Endothelial cell of umbilical vein (primary cell): ENCODE measurements at regions of chrX and their contacts with region 1.

Region 1: DNA sequence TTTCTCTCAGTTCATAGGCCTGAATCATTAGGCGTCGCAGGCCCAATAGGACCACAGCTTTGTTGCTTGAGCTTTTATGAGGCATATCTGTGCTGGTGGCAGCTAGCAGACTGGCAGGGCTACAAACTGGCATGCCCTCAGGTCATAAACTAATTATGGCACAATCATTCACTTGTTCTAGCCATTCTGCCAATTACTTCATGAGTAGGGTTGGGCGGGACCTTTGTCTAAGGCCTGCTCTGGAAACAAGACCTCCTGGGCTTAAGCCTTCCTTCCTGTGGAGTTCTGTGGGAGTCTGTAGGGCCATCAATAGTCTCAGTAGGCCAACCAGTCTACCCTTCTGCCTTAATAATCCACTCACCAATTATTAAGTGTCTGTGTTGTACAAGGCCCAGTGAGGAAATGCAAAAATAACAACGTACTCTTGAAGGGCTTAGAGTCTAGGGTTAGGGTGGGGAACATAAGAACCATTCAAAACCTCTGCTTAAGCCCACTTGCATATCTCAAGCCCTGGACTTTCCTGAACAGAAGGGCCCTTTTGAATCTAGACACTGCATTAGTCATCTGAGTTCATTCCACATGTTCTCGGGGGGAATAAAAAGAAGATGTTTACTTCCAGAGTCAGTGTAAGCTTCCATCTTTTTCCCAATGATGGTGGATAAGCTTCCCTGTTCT is 44.5 kb downstream of the SHROOM4 start:
- DNase-seq: peak; percentile 25
- H3K4me3 ChIP-seq: no peak overlapping the region
- H3K27ac ChIP-seq: peak overlapping the region; percentile 84
- H3K4me1 ChIP-seq: peaks cover 38% of the 10 kb centered on the region
- H3K27me3 ChIP-seq: no peaks in the 10 kb centered on the region
- CTCF ChIP-seq: no peak
- POLR2A ChIP-seq: no peak

Region 2: GRCh38 chrX:50799531-50799961 is 30.0 kb after region 1 on chrX:
- CTCF ChIA-PET with region 1: interaction called, 3 read pairs
- POLR2A ChIA-PET with region 1: no interaction called
- dilution Hi-C with region 1: no loop called
- intact Hi-C with region 1: loop called (anchors 2 kb)
- DNase-seq: peak; percentile 79
- H3K4me3 ChIP-seq: no peak overlapping the region
- H3K27ac ChIP-seq: peak overlapping the region; percentile 88
- H3K4me1 ChIP-seq: peaks cover 17% of the 10 kb centered on the region
- H3K27me3 ChIP-seq: no peaks in the 10 kb centered on the region
- CTCF ChIP-seq: no peak
- POLR2A ChIP-seq: no peak

Region 3: GRCh38 chrX:50838820-50839600 is 69.5 kb after region 1 on chrX:
- CTCF ChIA-PET with region 1: no interaction called
- POLR2A ChIA-PET with region 1: no interaction called
- dilution Hi-C with region 1: no loop called
- intact Hi-C with region 1: loop called (anchors 2 kb)
- DNase-seq: peak; percentile 75
- H3K4me3 ChIP-seq: no peak overlapping the region
- H3K27ac ChIP-seq: peak overlapping the region; percentile 37
- H3K4me1 ChIP-seq: peaks cover 9% of the 10 kb centered on the region
- H3K27me3 ChIP-seq: no peaks in the 10 kb centered on the region
- CTCF ChIP-seq: no peak
- POLR2A ChIP-seq: no peak